CD4-positive, alpha-beta T cell (primary cell): ENCODE measurements at regions of chr12 and their contacts with region 1.

Region 1: GRCh38 chr12:110590806-110591326 is 7.7 kb upstream of the PPTC7 start:
- DNase-seq: peak in 3 of 14 experiments; percentile 85 to 87 (median 86)
- ATAC-seq: peak; percentile 91
- H3K4me3 ChIP-seq: no peak overlapping the region
- H3K4me3 Mint-ChIP-seq: peak overlapping the region; percentile 73
- H3K27ac ChIP-seq: peak overlapping the region; percentile 68 to 82
- H3K27ac Mint-ChIP-seq: peak overlapping the region; percentile 96
- H3K4me1 ChIP-seq: peaks cover 27% of the 10 kb centered on the region
- H3K4me1 Mint-ChIP-seq: peaks cover 28% of the 10 kb centered on the region
- H3K27me3 ChIP-seq: no peaks in the 10 kb centered on the region
- H3K27me3 Mint-ChIP-seq: no peaks in the 10 kb centered on the region
- CTCF ChIP-seq: no peak

Region 2: DNA sequence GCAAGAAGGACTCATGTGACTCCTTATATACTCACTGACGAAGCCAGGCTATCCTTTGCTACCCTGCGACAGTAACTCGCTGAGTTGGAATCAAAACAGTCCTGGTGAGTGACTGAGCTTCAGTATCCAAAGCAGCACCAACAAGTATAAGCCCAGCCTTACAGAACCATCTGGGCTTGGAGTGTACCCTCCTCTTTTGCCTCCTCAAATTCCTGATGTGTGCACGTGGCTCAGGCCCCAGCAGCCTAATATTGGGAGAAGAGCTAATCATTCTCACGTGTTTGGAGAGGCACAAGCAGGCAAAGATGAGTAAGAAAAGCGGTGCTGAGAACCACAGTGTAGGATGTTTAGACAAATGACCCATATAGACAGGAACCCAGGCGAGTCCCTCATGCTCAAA is 42.2 kb before region 1 on chr12:
- CTCF ChIA-PET with region 1: interaction called, 16 read pairs
- POLR2A ChIA-PET with region 1: interaction called, 6 read pairs
- intact Hi-C with region 1: no loop called
- DNase-seq: no peak
- ATAC-seq: no peak
- H3K4me3 ChIP-seq: no peak overlapping the region
- H3K4me3 Mint-ChIP-seq: no peak overlapping the region
- H3K27ac ChIP-seq: no peak overlapping the region
- H3K27ac Mint-ChIP-seq: no peak overlapping the region
- H3K4me1 ChIP-seq: peaks cover 7% of the 10 kb centered on the region
- H3K4me1 Mint-ChIP-seq: peaks cover 39% of the 10 kb centered on the region
- H3K27me3 ChIP-seq: no peaks in the 10 kb centered on the region
- H3K27me3 Mint-ChIP-seq: no peaks in the 10 kb centered on the region
- CTCF ChIP-seq: no peak

Region 3: GRCh38 chr12:110555577-110556406 is 35.1 kb before region 1 on chr12:
- CTCF ChIA-PET with region 1: interaction called, 16 read pairs
- POLR2A ChIA-PET with region 1: interaction called, 6 read pairs
- intact Hi-C with region 1: no loop called
- DNase-seq: no peak
- ATAC-seq: no peak
- H3K4me3 ChIP-seq: no peak overlapping the region
- H3K4me3 Mint-ChIP-seq: no peak overlapping the region
- H3K27ac ChIP-seq: no peak overlapping the region
- H3K27ac Mint-ChIP-seq: peak overlapping the region; percentile 25
- H3K4me1 ChIP-seq: peaks cover 35% of the 10 kb centered on the region
- H3K4me1 Mint-ChIP-seq: peaks cover 60% of the 10 kb centered on the region
- H3K27me3 ChIP-seq: no peaks in the 10 kb centered on the region
- H3K27me3 Mint-ChIP-seq: no peaks in the 10 kb centered on the region
- CTCF ChIP-seq: no peak

Region 4: GRCh38 chr12:110776410-110776809 is 185.5 kb after region 1 on chr12:
- CTCF ChIA-PET with region 1: no interaction called
- POLR2A ChIA-PET with region 1: no interaction called
- intact Hi-C with region 1: no loop called
- DNase-seq: peak in 3 of 14 experiments; percentile 12 to 32 (median 18)
- ATAC-seq: no peak
- H3K4me3 ChIP-seq: no peak overlapping the region
- H3K4me3 Mint-ChIP-seq: peak overlapping the region; percentile 5
- H3K27ac ChIP-seq: no peak overlapping the region
- H3K27ac Mint-ChIP-seq: peak overlapping the region; percentile 22
- H3K4me1 ChIP-seq: peaks cover 53% of the 10 kb centered on the region
- H3K4me1 Mint-ChIP-seq: peaks cover 59% of the 10 kb centered on the region
- H3K27me3 ChIP-seq: no peaks in the 10 kb centered on the region
- H3K27me3 Mint-ChIP-seq: no peaks in the 10 kb centered on the region
- CTCF ChIP-seq: no peak